Activated T-helper 1 cell treated with anti-CD3 and anti-CD28 coated beads, Interleukin-12 subunit alpha, Interleukin-12 subunit beta, Interleukin-2, Interleukin-4 antibody, amounts not matched to agents 30 ng/mL and 10 ng/mL and 1 ng/mL, durations not matched to agents 14 hours and 24 hours and 36 hours (primary cell): ENCODE measurements at regions of chr2 and their contacts with region 1.

Region 1: DNA sequence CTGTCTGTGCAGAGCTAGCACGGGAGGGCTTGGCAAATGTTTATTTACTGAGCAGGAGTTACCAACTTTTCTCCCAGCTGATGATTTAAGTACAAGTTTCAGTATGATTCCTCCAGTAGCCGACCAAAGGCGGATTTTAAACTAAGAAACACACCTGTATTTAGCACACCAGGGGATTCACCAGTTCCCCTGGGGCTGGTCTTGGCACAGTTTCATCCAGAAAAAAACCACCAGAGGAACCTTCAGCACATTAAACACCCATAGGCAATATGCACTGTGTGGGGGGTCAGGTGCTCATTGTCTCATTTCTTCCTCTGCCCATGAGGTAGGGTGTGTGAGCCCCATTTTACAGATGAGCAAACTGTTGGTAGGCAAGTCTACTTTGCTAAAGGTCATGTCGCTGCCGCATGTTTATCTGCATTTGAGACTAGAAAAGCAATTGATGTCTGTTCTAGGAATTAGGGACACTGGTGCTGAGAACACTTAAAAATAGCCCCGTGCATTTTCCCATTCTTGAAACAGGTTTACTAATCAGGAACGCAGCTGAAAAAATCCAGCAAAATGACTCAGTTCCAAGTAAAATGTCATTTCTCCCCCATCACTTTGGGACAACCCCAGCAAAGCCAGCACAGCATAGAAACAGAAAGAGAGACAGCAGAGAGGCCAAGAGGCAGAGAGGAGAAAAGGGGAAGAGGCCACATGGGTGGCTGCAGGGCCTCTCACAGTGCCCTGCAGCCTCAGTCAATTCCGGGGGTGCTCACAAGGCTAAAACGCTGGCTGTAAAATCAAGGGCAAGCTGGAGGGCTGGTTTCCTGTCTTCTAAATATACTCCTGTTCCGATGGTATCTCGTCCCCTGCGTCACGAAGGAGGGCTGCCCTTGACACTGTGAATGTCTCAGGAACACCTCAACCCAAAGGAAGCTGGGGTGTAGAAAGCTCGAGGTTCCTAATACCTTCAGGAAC is 166.8 kb upstream of the ID2 start:
- DNase-seq: peak; percentile 58
- H3K4me3 Mint-ChIP-seq: peak overlapping the region; percentile 35
- H3K27ac Mint-ChIP-seq: peak overlapping the region; percentile 95
- H3K4me1 Mint-ChIP-seq: peaks cover 68% of the 10 kb centered on the region
- H3K27me3 Mint-ChIP-seq: no peaks in the 10 kb centered on the region

Region 2: GRCh38 chr2:7450188-7450832 is 1064.8 kb before region 1 on chr2:
- intact Hi-C with region 1: loop called (anchors 1 kb)
- DNase-seq: peak; percentile 65
- H3K4me3 Mint-ChIP-seq: peak overlapping the region; percentile 9
- H3K27ac Mint-ChIP-seq: peak overlapping the region; percentile 98
- H3K4me1 Mint-ChIP-seq: peaks cover 90% of the 10 kb centered on the region
- H3K27me3 Mint-ChIP-seq: no peaks in the 10 kb centered on the region

Region 3: GRCh38 chr2:7930800-7931635 is 584.1 kb before region 1 on chr2:
- intact Hi-C with region 1: loop called (anchors 1 kb)
- DNase-seq: no peak
- H3K4me3 Mint-ChIP-seq: no peak overlapping the region
- H3K27ac Mint-ChIP-seq: peak overlapping the region; percentile 81
- H3K4me1 Mint-ChIP-seq: peaks cover 11% of the 10 kb centered on the region
- H3K27me3 Mint-ChIP-seq: no peaks in the 10 kb centered on the region

Region 4: DNA sequence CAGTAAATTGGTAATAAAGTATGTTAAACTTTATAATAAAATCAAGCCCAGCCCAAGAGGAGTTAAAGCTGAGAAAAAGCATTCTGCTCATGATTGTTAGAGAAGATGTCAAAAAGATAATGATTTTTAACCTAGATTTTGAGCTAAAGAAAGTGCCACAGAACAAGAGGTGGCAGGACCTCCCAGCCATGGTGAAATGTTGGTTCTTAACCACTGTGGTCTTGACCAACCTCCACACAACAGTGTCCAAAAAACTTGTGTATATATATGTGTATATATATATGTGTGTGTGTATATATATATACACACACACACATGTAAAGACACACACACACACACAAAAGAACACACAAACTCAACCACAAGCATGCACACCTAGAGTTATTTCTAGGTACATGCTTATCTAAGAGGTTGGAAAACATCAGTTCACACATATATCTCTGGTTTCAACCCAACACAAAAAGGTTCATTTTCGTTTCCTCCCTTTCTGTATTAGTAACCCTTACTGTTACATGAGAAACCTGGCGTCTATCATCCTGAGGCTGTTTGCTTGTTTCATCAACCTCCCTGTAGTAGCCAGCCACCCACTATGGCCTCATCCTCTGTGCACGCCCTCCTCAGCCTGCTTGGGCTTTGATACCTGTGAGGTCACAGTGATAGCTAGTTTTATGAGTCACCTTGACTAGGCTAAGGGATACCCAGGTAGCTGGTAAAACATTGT is 465.1 kb before region 1 on chr2:
- intact Hi-C with region 1: loop called (anchors 1 kb)
- DNase-seq: peak; percentile 52
- H3K4me3 Mint-ChIP-seq: peak overlapping the region; percentile 43
- H3K27ac Mint-ChIP-seq: peak overlapping the region; percentile 93
- H3K4me1 Mint-ChIP-seq: peaks cover 48% of the 10 kb centered on the region
- H3K27me3 Mint-ChIP-seq: no peaks in the 10 kb centered on the region

Region 5: GRCh38 chr2:8303322-8303832 is 211.7 kb before region 1 on chr2:
- intact Hi-C with region 1: loop called (anchors 10 kb)
- DNase-seq: peak; percentile 77
- H3K4me3 Mint-ChIP-seq: peak overlapping the region; percentile 65
- H3K27ac Mint-ChIP-seq: peak overlapping the region; percentile 85
- H3K4me1 Mint-ChIP-seq: peaks cover 91% of the 10 kb centered on the region
- H3K27me3 Mint-ChIP-seq: peaks cover 7% of the 10 kb centered on the region

Region 6: DNA sequence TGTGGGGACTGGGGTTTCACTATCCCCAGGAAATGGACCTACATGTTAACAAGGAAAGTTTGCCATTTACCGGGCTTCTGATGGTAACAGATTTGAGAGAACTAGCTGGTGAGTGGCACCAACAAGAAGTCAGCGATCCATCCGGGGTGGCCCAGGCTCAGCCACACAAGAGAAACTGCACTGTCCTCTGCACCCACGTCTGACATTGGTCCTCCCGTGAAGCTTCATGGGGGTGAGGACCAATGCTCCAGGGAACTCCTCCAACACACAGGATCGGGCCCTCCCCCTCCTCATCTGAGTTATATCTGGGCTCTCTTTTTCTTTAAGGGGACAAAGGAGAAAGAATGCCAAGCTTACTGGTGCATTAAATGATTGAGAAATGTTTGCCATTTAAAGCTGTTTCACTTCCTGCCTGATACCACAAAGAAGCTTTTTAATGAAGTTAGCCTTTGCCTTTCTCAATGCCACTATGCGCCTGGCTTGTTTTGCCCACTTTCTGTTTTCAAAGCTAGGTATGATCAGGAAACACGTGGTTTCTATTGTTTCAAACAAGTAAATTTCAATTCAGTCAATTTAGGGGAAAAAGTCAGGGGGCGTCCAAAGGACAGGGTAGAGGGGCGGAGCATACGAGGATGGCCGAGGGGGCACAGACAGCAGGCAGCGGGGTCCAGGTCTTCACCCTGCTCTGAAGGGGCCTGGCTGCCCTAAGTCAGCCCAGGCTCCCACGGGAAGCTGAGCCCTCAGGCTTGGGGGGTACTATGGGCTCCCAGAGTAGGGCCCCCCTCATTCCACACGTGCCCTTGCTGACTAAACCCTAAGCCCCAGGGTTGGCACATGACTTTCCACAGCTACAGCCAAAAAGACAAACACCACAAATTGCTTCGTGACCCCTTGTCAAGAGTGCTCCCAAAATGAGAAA is 37.3 kb before region 1 on chr2:
- intact Hi-C with region 1: loop called (anchors 2 kb)
- DNase-seq: no peak
- H3K4me3 Mint-ChIP-seq: peak overlapping the region; percentile 31
- H3K27ac Mint-ChIP-seq: peak overlapping the region; percentile 76
- H3K4me1 Mint-ChIP-seq: peaks cover 97% of the 10 kb centered on the region
- H3K27me3 Mint-ChIP-seq: no peaks in the 10 kb centered on the region

Region 7: DNA sequence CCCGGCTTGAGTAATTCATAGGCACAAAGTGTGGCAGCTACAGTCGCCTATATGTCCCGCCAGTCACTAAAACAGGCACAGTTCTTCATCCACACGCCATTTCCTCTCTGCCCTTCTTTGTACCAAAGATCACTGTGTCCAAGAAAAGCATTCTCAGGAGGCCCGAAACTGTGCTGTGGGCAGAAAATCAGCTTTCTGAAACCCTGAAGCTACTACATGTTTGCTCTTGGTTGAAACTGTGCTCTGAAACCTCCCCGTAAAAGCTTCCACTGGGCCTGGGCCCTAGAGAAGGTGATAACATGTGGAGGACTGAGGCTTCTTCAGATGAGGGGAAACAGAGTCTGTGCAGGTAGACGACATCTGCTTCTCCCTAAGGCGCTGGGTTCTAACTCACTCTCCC is 91.1 kb after region 1 on chr2:
- intact Hi-C with region 1: loop called (anchors 1 kb)
- DNase-seq: no peak
- H3K4me3 Mint-ChIP-seq: no peak overlapping the region
- H3K27ac Mint-ChIP-seq: no peak overlapping the region
- H3K4me1 Mint-ChIP-seq: peaks cover 44% of the 10 kb centered on the region
- H3K27me3 Mint-ChIP-seq: peaks cover 1% of the 10 kb centered on the region

Region 8: DNA sequence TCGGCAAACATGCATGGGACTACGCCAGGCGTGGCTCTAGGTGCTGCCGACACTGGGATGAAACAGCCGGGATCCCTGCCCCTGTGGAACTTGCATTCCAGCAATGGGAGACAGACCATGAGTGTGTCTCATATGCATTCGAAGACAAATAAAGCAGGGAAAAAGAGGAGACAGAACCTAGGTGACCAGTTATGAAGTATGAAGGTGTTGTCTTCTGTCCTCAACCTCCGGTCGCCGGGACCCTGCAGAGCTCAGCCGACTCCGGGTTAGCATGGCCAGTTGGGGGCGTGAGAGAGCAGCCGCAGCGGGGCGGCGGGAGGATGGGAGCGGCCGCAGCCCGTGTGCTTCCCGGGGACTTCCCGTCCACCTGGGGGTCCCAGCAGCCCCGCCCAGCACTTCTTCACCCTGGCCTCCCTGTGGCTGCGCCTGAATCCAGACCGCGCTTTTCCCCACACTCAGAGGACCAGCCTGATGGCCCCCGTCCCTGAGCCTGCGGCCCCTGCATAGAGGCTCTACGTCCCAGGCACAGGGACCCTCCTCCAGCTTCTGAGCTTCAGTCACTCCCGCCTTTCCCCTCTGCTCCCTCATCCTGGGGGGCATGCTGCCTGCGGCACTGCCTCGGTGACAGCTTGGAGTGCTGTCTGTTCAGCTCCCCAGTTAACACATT is 178.2 kb after region 1 on chr2:
- intact Hi-C with region 1: no loop called
- DNase-seq: no peak
- H3K4me3 Mint-ChIP-seq: no peak overlapping the region
- H3K27ac Mint-ChIP-seq: no peak overlapping the region
- H3K4me1 Mint-ChIP-seq: no peaks in the 10 kb centered on the region
- H3K27me3 Mint-ChIP-seq: peaks cover 26% of the 10 kb centered on the region